HepG2 (cell line): ENCODE measurements at regions of chr10 and their contacts with region 1.

Region 1: GRCh38 chr10:125990974-125991791 is 94.8 kb downstream of the FANK1 start:
- DNase-seq: no peak
- ATAC-seq: no peak
- H3K4me3 ChIP-seq: no peak overlapping the region
- H3K27ac ChIP-seq: no peak overlapping the region
- H3K4me1 ChIP-seq: no peaks in the 10 kb centered on the region
- H3K27me3 ChIP-seq: peaks cover 3 to 40% of the 10 kb centered on the region in 2 experiments; a peak in 4 of 5 replicates
- CTCF ChIP-seq: no peak
- EP300 ChIP-seq: no peak
- POLR2A ChIP-seq: no peak
- RAD21 ChIP-seq: no peak

Region 2: DNA sequence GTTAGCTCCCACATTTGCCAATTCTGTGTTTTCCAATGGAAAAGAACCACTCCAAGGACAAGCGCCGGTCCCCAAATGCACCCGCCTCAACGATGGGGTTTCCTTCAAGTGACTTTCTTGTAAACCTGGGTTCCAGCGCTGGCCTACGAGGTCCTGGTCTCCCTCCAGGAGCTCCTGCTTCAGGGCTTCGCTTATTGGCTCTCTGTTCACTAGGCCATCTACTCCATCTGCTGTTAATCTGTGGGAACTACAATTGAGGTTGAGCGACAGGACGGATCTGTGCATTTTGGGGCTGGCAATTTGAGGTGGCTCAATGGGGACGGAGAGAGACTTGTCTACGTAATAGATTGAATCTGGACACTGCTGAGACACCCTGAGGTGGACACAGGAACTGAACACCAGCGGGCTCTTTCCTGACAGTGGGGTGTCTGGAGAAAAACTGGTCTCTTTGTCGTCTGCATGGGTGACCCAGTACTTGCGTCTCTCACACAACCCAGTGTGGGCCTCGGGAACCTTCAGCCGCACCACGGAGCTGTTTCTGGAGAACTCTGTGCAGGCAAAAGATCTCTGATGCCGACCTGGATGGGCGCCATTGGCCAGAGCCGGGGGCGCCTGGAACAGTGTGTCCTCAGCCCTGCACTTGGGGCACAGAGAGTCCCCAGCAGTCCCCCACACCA is 513.0 kb after region 1 on chr10:
- CTCF ChIA-PET with region 1: no interaction called
- POLR2A ChIA-PET with region 1: no interaction called
- in situ Hi-C with region 1: loop called (anchors 5 kb)
- intact Hi-C with region 1: no loop called
- DNase-seq: peak; percentile 59
- ATAC-seq: peak; percentile 93
- H3K4me3 ChIP-seq: no peak overlapping the region
- H3K27ac ChIP-seq: no peak overlapping the region
- H3K4me1 ChIP-seq: no peaks in the 10 kb centered on the region
- H3K27me3 ChIP-seq: peaks cover 2 to 3% of the 10 kb centered on the region in 2 experiments; a peak in 2 of 5 replicates
- CTCF ChIP-seq: peak; percentile 76
- EP300 ChIP-seq: no peak
- POLR2A ChIP-seq: no peak
- RAD21 ChIP-seq: peak; percentile 51; the same call in 1 of the 2 replicates